CD8-positive, alpha-beta memory T cell (primary cell): ENCODE measurements at regions of chr14 and their contacts with region 1.

Region 1: GRCh38 chr14:91418387-91419043 is 895 bp upstream of the CCDC88C start:
- DNase-seq: peak; percentile 73 to 88 (median 83)
- H3K4me3 ChIP-seq: peak overlapping the region; percentile 60
- H3K4me3 Mint-ChIP-seq: peak overlapping the region; percentile 81 to 93 (median 86)
- H3K27ac ChIP-seq: peak overlapping the region; percentile 29
- H3K27ac Mint-ChIP-seq: peak overlapping the region; percentile 55 to 97 (median 94)
- H3K4me1 ChIP-seq: peaks cover 30% of the 10 kb centered on the region
- H3K4me1 Mint-ChIP-seq: peaks cover 34 to 48% (median 37%) of the 10 kb centered on the region in 3 donors
- H3K27me3 ChIP-seq: no peaks in the 10 kb centered on the region
- H3K27me3 Mint-ChIP-seq: no peaks in the 10 kb centered on the region

Region 2: DNA sequence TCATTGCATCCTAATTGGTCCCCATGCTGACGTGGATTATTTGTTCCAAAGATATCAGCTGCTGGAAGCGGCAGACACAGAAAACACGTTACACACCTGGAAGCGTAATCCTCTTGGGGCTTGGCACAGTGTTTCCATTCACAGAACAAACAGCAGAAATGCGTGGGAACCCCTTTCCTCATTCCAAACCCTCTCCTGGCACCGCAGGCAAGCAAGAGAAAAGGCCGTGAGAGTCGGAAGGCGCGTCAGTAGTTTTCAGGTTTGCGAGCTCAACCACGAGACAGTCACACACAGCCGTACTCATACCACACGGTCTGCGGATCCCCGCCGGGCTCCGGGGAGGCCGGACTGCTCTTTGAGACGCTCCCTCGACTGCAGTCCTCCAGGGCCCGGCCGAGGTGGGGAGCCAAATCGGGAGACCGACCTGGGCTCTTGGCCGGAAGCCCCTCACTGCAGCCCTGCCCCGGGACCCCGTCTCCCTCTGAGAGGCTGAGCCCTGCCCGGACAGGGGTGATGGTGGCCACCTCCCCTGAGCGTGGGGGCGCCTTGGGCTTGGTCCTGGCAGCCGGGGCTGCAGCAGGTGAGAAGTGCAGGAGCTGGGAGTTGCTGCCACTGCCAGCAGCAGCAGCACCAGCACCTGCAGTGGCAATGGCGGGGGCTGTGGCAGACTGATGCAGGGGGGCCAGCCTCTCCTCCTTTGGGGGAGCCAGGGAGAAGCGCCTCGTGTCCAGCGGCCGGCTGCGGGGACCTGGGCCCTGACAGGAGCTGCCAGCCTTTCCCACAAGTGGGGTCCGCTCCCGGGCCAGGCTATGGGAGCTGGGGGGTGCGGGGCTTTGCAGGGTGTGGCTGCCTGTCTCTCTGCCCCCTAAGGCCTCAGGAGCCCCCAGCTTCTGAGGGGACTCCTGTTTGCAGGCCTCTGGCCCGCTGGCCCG is 145.9 kb before region 1 on chr14:
- CTCF ChIA-PET with region 1: no interaction called
- POLR2A ChIA-PET with region 1: no interaction called
- DNase-seq: no peak
- H3K4me3 ChIP-seq: no peak overlapping the region
- H3K4me3 Mint-ChIP-seq: peak overlapping the region in 1 of 7 donors; percentile 56
- H3K27ac ChIP-seq: no peak overlapping the region
- H3K27ac Mint-ChIP-seq: peak overlapping the region in 4 of 8 donors; percentile 56 to 86 (median 74)
- H3K4me1 ChIP-seq: no peaks in the 10 kb centered on the region
- H3K4me1 Mint-ChIP-seq: peaks cover 11 to 17% (median 15%) of the 10 kb centered on the region in 3 donors
- H3K27me3 ChIP-seq: no peaks in the 10 kb centered on the region
- H3K27me3 Mint-ChIP-seq: peaks cover 0 to 7% of the 10 kb centered on the region in 2 donors

Region 3: GRCh38 chr14:91317381-91318308 is 100.9 kb before region 1 on chr14:
- CTCF ChIA-PET with region 1: interaction called, 34 read pairs
- POLR2A ChIA-PET with region 1: interaction called, 21 read pairs
- DNase-seq: peak; percentile 71 to 93 (median 85)
- H3K4me3 ChIP-seq: peak overlapping the region; percentile 22
- H3K4me3 Mint-ChIP-seq: peak overlapping the region; percentile 39 to 89 (median 77)
- H3K27ac ChIP-seq: peak overlapping the region; percentile 65
- H3K27ac Mint-ChIP-seq: peak overlapping the region; percentile 90 to 100 (median 98)
- H3K4me1 ChIP-seq: peaks cover 79% of the 10 kb centered on the region
- H3K4me1 Mint-ChIP-seq: peaks cover 65 to 86% (median 82%) of the 10 kb centered on the region in 3 donors
- H3K27me3 ChIP-seq: no peaks in the 10 kb centered on the region
- H3K27me3 Mint-ChIP-seq: peaks cover 0 to 9% of the 10 kb centered on the region in 2 donors

Region 4: DNA sequence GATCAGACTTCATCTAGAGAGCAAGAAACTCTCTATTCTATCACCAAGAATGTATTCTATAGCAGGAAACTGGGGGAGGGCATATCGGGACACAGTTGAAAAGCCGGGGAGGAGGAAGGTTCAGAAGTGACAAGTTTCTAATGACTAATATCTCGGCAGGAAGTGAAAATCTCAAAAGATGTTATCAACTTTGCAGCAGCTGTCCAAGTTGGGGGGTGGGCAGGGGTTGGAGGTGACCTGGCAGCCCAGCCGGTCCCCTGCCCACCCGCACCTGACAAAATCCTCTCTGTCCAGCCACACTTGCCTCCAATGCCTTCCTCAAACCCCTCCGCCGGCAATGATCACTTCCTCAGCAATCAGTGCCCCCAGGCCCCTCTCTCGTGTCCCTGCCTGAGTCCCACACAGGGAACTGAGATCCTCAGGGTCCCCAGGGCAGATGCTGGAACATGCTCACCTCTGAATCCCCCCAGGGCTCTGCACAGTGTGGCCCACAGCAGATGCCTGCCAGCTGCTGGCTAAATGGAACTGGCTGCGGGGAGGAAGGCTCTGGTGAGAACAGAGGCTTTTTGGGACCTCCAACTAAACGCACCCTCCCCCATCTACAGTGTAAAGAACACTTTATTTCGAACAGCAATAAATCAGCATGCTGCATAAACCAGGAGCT is 44.8 kb before region 1 on chr14:
- CTCF ChIA-PET with region 1: interaction called, 60 read pairs
- POLR2A ChIA-PET with region 1: interaction called, 15 read pairs
- DNase-seq: peak in 4 of 5 donors; percentile 37 to 68 (median 51)
- H3K4me3 ChIP-seq: peak overlapping the region; percentile 68
- H3K4me3 Mint-ChIP-seq: peak overlapping the region; percentile 71 to 90 (median 85)
- H3K27ac ChIP-seq: peak overlapping the region; percentile 63
- H3K27ac Mint-ChIP-seq: peak overlapping the region; percentile 84 to 99 (median 95)
- H3K4me1 ChIP-seq: peaks cover 99% of the 10 kb centered on the region
- H3K4me1 Mint-ChIP-seq: peaks cover 94 to 100% (median 100%) of the 10 kb centered on the region in 3 donors
- H3K27me3 ChIP-seq: no peaks in the 10 kb centered on the region
- H3K27me3 Mint-ChIP-seq: no peaks in the 10 kb centered on the region

Region 5: DNA sequence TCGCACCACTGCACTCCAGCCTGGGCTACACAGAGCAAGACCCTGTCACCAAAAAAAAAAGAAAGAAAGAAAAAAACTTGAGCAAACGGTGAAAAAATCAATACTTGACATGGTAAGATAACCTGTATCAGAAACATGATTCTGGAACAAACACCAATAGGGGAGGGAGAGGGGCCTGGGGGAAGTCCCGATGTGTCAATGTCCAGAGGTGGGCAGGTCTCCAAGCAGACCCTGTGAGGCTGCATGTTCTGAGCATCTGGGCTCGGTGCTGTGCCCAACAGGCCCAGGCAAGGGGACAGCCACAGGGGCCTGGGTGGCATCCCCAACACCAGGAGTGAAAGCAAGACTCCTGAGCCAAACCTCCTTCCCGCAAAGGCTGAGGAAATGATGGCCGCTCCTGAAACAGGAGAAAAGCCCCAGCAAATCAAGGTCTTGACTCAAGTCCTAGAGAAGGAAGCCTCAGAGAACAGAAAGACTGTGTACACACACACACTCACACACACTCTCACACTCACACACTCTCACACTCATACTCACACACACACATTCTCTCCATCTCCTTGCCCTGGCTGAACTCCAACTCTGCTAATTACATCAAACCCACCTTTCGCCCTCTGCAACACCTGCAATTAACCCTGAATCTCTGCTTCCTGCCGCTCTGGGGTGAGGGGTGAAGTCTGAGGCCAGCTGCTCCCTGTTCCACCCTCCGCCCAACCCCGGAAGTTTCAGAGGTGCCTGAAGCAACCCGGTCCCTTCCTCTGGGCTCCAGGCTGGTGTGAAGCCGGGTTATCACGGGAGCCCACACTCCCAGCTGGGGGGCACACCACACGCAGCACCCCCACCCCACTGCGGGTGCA is 21.3 kb before region 1 on chr14:
- CTCF ChIA-PET with region 1: interaction called, 211 read pairs
- POLR2A ChIA-PET with region 1: interaction called, 58 read pairs
- DNase-seq: peak in 4 of 5 donors; percentile 52 to 77 (median 70)
- H3K4me3 ChIP-seq: peak overlapping the region; percentile 44
- H3K4me3 Mint-ChIP-seq: peak overlapping the region; percentile 88 to 100 (median 99)
- H3K27ac ChIP-seq: peak overlapping the region; percentile 43
- H3K27ac Mint-ChIP-seq: peak overlapping the region; percentile 91 to 100 (median 96)
- H3K4me1 ChIP-seq: peaks cover 95% of the 10 kb centered on the region
- H3K4me1 Mint-ChIP-seq: peaks cover 86 to 99% (median 97%) of the 10 kb centered on the region in 3 donors
- H3K27me3 ChIP-seq: no peaks in the 10 kb centered on the region
- H3K27me3 Mint-ChIP-seq: peaks cover 0 to 1% of the 10 kb centered on the region in 2 donors